ENCODE measurements at regions of chr17 and their contacts with region 1.

Region 1: DNA sequence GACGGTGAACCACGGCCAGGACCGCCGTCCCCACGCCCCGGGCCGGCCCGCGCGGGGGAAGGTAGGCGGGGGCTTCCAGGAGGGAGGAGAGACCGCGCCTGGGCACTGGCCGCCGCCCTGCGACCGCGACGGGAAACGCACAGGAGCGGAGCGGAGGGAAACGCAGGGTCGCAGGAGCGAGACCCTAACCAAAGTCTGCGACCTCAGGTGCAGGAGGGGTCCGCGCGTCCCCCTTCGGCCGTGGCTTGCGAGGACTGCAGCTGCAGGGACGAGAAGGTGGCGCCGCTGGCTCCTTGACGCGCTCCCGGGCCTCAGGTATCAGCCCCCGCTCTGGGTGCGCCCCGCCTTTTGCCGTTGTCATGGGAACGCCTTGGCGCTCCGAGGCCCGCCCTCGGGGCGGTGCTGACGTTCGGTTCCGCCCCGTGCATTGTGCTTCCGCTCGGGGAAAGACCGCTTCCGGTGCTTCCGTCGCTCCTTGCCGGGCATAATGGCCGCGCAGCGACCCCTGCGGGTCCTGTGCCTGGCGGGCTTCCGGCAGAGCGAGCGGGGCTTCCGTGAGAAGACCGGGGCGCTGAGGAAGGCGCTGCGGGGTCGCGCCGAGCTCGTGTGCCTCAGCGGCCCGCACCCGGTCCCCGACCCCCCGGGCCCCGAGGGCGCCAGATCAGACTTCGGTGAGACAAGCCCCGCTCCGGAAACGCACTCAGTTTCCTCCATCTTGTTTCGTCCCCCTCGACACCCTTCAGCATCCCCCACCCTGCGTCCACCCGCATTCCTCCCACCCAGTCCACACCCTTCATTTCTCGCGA is at the start of gene OVCA2:
- DNase-seq: peak; percentile 97
- H3K4me3 ChIP-seq: peak within 1 kb of the TSS; percentile 63 to 89 (median 84)
- H3K27ac ChIP-seq: peak within 1 kb of the TSS; percentile 84 to 95 (median 92)
- H3K4me1 ChIP-seq: peaks cover 19 to 32% (median 31%) of the 10 kb centered on the region in 4 donors
- H3K27me3 ChIP-seq: no peaks in the 10 kb centered on the region
- CTCF ChIP-seq: peak; percentile 49 to 74 (median 61)
- EP300 ChIP-seq: no peak
- POLR2A ChIP-seq: no peak
- total RNA-seq, gene OVCA2: 34.9 to 38.9 (median 38.0) TPM

Region 2: GRCh38 chr17:1908699-1909309 is 133.0 kb before region 1 on chr17:
- intact Hi-C with region 1: loop called (anchors 5 kb)
- DNase-seq: no peak
- H3K4me3 ChIP-seq: peak overlapping the region; percentile 21 to 40 (median 31)
- H3K27ac ChIP-seq: no peak overlapping the region
- H3K4me1 ChIP-seq: peaks cover 4 to 16% (median 13%) of the 10 kb centered on the region in 4 donors
- H3K27me3 ChIP-seq: peaks cover 0 to 92% (median 23%) of the 10 kb centered on the region in 4 donors
- CTCF ChIP-seq: peak; percentile 69
- EP300 ChIP-seq: no peak
- POLR2A ChIP-seq: no peak

Region 3: DNA sequence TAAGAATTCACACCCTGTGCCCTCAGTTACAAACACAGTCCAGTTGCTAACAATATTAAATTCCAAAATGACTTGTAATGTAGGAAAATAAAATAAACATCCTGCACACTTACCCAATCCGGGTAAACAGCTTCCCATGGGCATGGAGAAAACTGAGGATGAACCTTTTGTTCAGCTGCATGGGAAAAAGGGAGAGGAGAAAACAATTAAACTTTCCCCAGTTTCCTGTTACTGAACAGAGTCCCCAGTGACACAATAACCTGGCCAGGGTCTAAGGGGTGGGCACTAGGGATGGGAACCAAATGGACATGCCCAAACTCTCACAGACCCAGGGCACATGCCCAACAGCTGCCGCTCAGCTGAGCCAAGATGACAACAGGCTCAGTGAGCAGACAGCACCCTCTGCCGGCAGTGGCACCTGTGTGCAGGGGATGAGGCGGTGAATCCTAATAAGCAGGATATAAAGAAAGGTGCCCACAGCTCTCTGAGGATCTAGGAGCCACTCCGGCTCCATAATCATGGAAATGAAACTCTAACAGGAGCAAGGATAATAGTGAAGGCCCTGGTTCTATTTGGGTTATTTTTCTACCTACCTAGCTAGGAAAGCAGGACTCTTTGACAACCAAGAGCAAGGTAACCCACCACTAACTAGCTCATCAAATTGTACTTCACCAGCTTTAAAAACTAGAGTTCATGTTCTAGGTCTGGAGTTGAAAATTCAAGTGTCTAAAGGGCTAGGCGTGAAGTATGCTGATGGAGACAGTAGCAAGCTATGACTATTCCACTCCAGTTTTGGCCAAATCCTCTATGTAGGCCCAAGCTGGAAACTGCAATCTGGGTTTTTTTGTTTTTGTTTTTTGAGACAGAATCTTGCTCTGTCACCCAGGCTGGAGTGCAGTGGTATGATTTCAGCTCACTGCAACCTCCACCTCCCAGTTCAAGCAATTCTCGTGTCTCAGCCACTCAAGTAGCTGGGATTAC is 203.1 kb after region 1 on chr17:
- intact Hi-C with region 1: no loop called
- DNase-seq: peak; percentile 96
- H3K4me3 ChIP-seq: no peak overlapping the region
- H3K27ac ChIP-seq: peak overlapping the region; percentile 56 to 74 (median 69)
- H3K4me1 ChIP-seq: peaks cover 6 to 51% (median 36%) of the 10 kb centered on the region in 4 donors
- H3K27me3 ChIP-seq: no peaks in the 10 kb centered on the region
- CTCF ChIP-seq: peak; percentile 98
- EP300 ChIP-seq: no peak
- POLR2A ChIP-seq: no peak

Measured in esophagus muscularis mucosa (tissue), 4 donors.